Prostate gland (tissue), 2 donors: ENCODE measurements at regions of chr3 and their contacts with region 1.

Region 1: DNA sequence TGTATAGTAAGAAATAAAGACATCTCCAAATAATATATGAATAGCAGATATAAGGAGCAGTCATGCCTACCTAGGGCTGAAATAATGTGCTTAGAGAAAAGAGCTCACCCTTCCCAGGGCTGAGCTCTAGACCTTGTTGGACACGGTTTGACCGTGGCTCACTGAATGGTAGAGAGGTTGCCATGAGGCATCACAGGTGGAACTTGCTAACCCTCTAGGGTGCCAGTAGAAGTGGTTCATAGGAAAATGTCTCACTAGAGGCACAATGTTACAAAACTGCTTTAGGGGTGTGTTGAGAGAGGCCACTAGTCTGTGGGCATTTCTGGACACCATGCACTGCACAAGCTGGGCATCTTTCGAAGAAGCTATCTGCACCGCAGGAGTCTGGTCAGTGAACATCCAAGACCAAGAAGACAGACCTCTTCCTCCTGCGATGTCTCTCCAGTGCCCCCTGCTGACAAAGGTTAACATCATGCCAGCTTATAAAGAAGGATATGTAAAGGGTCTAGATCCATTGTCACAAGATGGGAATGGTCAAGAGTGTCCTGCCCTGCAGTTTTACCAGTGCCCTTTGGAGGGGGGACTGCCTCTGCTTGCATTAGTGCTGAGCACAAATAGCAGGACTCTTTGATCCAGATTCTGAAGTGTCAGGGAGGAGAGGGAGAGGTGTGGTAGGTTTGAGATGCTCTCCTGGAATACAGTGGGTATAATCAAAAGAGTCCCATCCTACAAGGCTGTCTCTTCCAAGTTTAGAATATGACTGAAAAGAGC is 266.8 kb downstream of the ZNF385D start:
- DNase-seq: peak; percentile 8
- H3K4me3 ChIP-seq: no peak overlapping the region
- H3K27ac ChIP-seq: no peak overlapping the region
- H3K4me1 ChIP-seq: no peaks in the 10 kb centered on the region
- H3K27me3 ChIP-seq: no peaks in the 10 kb centered on the region
- CTCF ChIP-seq: peak in 3 of 4 experiments; percentile 25 to 35 (median 35)
- POLR2A ChIP-seq: no peak

Region 2: GRCh38 chr3:20340324-20340928 is 1143.8 kb before region 1 on chr3:
- intact Hi-C with region 1: loop called (anchors 5 kb)
- DNase-seq: peak; percentile 59
- H3K4me3 ChIP-seq: no peak overlapping the region
- H3K27ac ChIP-seq: no peak overlapping the region
- H3K4me1 ChIP-seq: no peaks in the 10 kb centered on the region
- H3K27me3 ChIP-seq: no peaks in the 10 kb centered on the region
- CTCF ChIP-seq: peak; percentile 69 to 78 (median 74)
- POLR2A ChIP-seq: no peak

Region 3: DNA sequence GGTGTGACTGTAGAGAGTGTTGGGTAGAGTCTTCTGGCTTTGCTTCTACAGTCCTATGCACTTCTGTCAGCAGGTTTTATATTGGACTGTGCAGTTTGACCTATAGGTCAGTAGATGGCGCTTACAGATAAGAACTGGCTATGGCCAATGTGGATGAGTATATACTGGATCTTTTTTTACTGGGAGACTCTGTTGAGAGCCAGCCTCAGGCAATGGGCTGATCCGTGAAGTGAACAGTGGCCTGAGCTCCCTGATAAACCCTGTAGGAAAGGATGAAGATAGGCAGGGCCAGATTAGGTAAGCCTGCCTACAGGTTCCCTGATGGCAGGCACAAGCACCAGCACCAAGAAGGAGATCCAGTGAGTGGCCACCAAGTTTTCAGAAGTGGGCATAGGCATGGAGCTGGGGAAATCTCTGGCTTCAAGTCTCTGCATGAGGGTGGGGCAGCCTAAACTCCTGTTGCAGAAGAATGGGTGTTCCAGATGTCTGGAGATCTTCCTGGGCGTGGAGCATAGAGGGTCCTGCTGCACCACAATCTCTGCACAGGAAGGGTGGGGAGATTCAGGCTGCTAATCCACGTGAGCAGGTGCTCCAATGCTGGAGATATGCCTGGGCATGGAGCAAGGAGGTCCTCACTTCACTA is 972.3 kb before region 1 on chr3:
- intact Hi-C with region 1: loop called (anchors 2 kb)
- DNase-seq: no peak
- H3K4me3 ChIP-seq: no peak overlapping the region
- H3K27ac ChIP-seq: no peak overlapping the region
- H3K4me1 ChIP-seq: no peaks in the 10 kb centered on the region
- H3K27me3 ChIP-seq: no peaks in the 10 kb centered on the region
- CTCF ChIP-seq: peak in 3 of 4 experiments; percentile 29 to 51 (median 32)
- POLR2A ChIP-seq: no peak